ENCODE measurements at regions of chr2 and their contacts with region 1.

Region 1: GRCh38 chr2:30127016-30127893 is 19.6 kb upstream of the YPEL5 start:
- DNase-seq: peak; percentile 65
- ATAC-seq: peak; percentile 91
- H3K4me3 ChIP-seq: no peak overlapping the region
- H3K27ac ChIP-seq: no peak overlapping the region
- H3K4me1 ChIP-seq: peaks cover 9% of the 10 kb centered on the region
- H3K27me3 ChIP-seq: no peaks in the 10 kb centered on the region
- CTCF ChIP-seq: no peak

Region 2: GRCh38 chr2:30098266-30099005 is 28.8 kb before region 1 on chr2:
- CTCF ChIA-PET with region 1: no interaction called
- POLR2A ChIA-PET with region 1: no interaction called
- intact Hi-C with region 1: loop called (anchors 5 kb)
- DNase-seq: no peak
- ATAC-seq: no peak
- H3K4me3 ChIP-seq: no peak overlapping the region
- H3K27ac ChIP-seq: no peak overlapping the region
- H3K4me1 ChIP-seq: no peaks in the 10 kb centered on the region
- H3K27me3 ChIP-seq: 0 out of 2 replicates have a peak, but pooled peaks cover 8% of the 10 kb centered on the region
- CTCF ChIP-seq: no peak

Region 3: GRCh38 chr2:30155889-30156658 is 28.8 kb after region 1 on chr2:
- CTCF ChIA-PET with region 1: no interaction called
- POLR2A ChIA-PET with region 1: no interaction called
- intact Hi-C with region 1: no loop called
- DNase-seq: no peak
- ATAC-seq: no peak
- H3K4me3 ChIP-seq: no peak overlapping the region
- H3K27ac ChIP-seq: no peak overlapping the region
- H3K4me1 ChIP-seq: no peaks in the 10 kb centered on the region
- H3K27me3 ChIP-seq: no peaks in the 10 kb centered on the region
- CTCF ChIP-seq: no peak